ENCODE measurements at regions of chr12 and their contacts with region 1.

Region 1: GRCh38 chr12:45990468-45991283 is at the start of gene SCAF11:
- DNase-seq: peak; percentile 97
- H3K27ac ChIP-seq: peak within 1 kb of the TSS; percentile 99
- CTCF ChIP-seq: peak; percentile 93

Region 2: GRCh38 chr12:47020211-47020821 is 1029.6 kb after region 1 on chr12:
- CTCF ChIA-PET with region 1: interaction called, 11 read pairs
- POLR2A ChIA-PET with region 1: no interaction called
- DNase-seq: no peak
- H3K27ac ChIP-seq: no peak overlapping the region
- CTCF ChIP-seq: no peak